A549 (cell line): ENCODE measurements at regions of chr7 and their contacts with region 1.

Region 1: GRCh38 chr7:51162724-51163329 is 153.8 kb downstream of the COBL start:
- DNase-seq: peak; percentile 41 to 88
- ATAC-seq: peak; percentile 97 to 99
- H3K4me3 ChIP-seq: no peak overlapping the region
- H3K27ac ChIP-seq: no peak overlapping the region
- H3K4me1 ChIP-seq: peaks cover 4% of the 10 kb centered on the region; the same call in 1 of the 3 replicates
- CTCF ChIP-seq: peak; percentile 94
- EP300 ChIP-seq: no peak
- POLR2A ChIP-seq: no peak
- RAD21 ChIP-seq: peak; percentile 86 to 91

Region 2: DNA sequence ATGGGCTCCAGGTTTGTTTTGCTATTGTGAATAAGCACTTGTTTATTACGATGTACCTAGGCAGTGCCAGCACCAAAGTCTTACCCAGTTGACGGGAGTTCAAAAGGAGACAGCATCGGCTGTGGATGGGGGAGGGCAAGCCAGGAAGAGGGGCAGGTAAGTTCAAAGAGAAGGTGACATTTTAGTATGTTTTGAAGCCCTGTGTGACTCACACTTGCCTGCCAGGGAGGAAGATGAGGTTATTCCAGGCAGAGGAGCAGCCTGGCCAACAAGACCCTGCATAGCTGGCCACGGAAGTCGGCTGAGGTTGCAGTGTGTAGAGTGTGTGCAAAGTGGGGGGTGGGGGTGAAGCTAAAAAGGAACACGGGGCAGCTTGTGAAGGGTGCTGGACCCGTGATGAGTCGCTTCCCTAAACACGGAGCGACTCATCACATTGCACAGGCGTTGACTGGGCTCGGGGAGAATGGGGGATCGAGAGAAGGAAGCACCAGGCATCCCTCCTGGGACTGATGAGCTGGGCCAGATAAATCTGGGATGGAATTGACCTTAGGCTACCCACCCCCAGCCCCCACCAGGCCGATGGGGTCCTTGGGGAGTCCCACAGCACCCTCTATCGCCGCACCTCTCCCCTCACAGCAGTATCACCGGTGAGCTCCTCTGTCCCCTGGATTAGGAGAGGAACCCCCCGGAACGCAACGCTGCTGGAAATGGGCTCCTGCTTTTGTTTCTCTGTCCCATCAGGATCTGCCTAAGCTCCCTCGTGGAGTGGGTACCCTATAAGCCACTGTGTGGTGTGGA is 956.2 kb before region 1 on chr7:
- CTCF ChIA-PET with region 1: interaction called, 53 read pairs
- POLR2A ChIA-PET with region 1: no interaction called
- DNase-seq: no peak
- ATAC-seq: 0 out of 6 replicates have a peak, but pooled peaks of 1 of the 2 experiments have one; percentile 45
- H3K4me3 ChIP-seq: no peak overlapping the region
- H3K27ac ChIP-seq: no peak overlapping the region
- H3K4me1 ChIP-seq: no peaks in the 10 kb centered on the region
- CTCF ChIP-seq: no peak
- EP300 ChIP-seq: no peak
- POLR2A ChIP-seq: no peak
- RAD21 ChIP-seq: no peak

Region 3: GRCh38 chr7:50838675-50839377 is 324.0 kb before region 1 on chr7:
- CTCF ChIA-PET with region 1: no interaction called
- POLR2A ChIA-PET with region 1: no interaction called
- DNase-seq: peak in 1 of 2 experiments; percentile 79
- ATAC-seq: peak; percentile 73 to 81
- H3K4me3 ChIP-seq: no peak overlapping the region
- H3K27ac ChIP-seq: peak overlapping the region; percentile 73 to 85
- H3K4me1 ChIP-seq: peaks cover 46% of the 10 kb centered on the region
- CTCF ChIP-seq: no peak
- EP300 ChIP-seq: peak; percentile 26 to 45; a peak in 2 of 5 replicates
- POLR2A ChIP-seq: no peak
- RAD21 ChIP-seq: peak in 1 of 2 experiments; percentile 25; a peak in 1 of 5 replicates

Region 4: GRCh38 chr7:51175316-51175991 is 12.6 kb after region 1 on chr7:
- CTCF ChIA-PET with region 1: interaction called, 65 read pairs
- POLR2A ChIA-PET with region 1: no interaction called
- DNase-seq: no peak
- ATAC-seq: 0 out of 6 replicates have a peak, but pooled peaks of 1 of the 2 experiments have one; percentile 13
- H3K4me3 ChIP-seq: no peak overlapping the region
- H3K27ac ChIP-seq: no peak overlapping the region
- H3K4me1 ChIP-seq: peaks cover 8% of the 10 kb centered on the region; the same call in 2 of the 3 replicates
- CTCF ChIP-seq: no peak
- EP300 ChIP-seq: no peak
- POLR2A ChIP-seq: no peak
- RAD21 ChIP-seq: no peak

Region 5: GRCh38 chr7:51352174-51353100 is 189.6 kb after region 1 on chr7:
- CTCF ChIA-PET with region 1: interaction called, 30 read pairs
- POLR2A ChIA-PET with region 1: no interaction called
- DNase-seq: no peak
- ATAC-seq: peak; percentile 38 to 52; a peak in 2 of 6 replicates
- H3K4me3 ChIP-seq: no peak overlapping the region
- H3K27ac ChIP-seq: no peak overlapping the region
- H3K4me1 ChIP-seq: peaks cover 8% of the 10 kb centered on the region; the same call in 2 of the 3 replicates
- CTCF ChIP-seq: no peak
- EP300 ChIP-seq: no peak
- POLR2A ChIP-seq: no peak
- RAD21 ChIP-seq: no peak

Region 6: DNA sequence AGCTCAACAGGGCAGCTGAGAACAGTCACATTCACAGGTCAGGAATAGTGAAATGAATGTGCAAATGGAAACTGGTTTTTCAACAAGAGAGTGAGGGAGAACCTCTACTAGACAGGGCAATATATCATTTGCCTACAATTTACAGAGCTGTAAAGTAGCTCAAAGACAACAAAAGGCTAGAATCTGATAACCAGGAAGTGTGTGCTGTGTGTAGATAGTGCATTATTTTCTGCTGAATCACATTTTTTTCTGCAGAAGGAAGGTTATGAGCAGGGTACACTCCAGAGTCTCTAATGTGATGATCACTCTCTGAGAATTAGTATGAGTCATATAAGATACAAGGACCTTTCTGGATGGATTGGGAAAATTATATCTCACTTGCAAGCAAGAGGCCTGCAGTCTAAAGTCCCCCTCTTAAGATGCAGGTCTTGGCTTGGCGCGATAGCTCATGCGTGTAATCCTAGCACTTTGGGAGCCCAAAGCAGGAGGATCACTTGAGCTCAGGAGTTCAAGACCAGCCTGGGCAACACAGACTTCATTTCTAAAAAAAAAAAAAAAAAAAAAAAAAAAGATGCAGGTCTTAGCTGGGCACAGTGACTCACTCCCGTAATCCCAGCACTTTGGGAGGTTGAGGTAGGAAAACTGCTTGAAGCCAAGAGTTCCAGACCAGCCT is 213.7 kb after region 1 on chr7:
- CTCF ChIA-PET with region 1: interaction called, 176 read pairs
- POLR2A ChIA-PET with region 1: no interaction called
- DNase-seq: peak in 1 of 2 experiments; percentile 89
- ATAC-seq: peak; percentile 90 to 98
- H3K4me3 ChIP-seq: no peak overlapping the region
- H3K27ac ChIP-seq: peak overlapping the region; percentile 36 to 77; a peak in 5 of 6 replicates
- H3K4me1 ChIP-seq: peaks cover 20% of the 10 kb centered on the region
- CTCF ChIP-seq: no peak
- EP300 ChIP-seq: no peak
- POLR2A ChIP-seq: no peak
- RAD21 ChIP-seq: no peak

Region 7: GRCh38 chr7:51517187-51517586 is 354.4 kb after region 1 on chr7:
- CTCF ChIA-PET with region 1: no interaction called
- POLR2A ChIA-PET with region 1: no interaction called
- DNase-seq: no peak
- ATAC-seq: no peak
- H3K4me3 ChIP-seq: no peak overlapping the region
- H3K27ac ChIP-seq: no peak overlapping the region
- H3K4me1 ChIP-seq: no peaks in the 10 kb centered on the region
- CTCF ChIP-seq: no peak
- EP300 ChIP-seq: no peak
- POLR2A ChIP-seq: no peak
- RAD21 ChIP-seq: no peak

Region 8: DNA sequence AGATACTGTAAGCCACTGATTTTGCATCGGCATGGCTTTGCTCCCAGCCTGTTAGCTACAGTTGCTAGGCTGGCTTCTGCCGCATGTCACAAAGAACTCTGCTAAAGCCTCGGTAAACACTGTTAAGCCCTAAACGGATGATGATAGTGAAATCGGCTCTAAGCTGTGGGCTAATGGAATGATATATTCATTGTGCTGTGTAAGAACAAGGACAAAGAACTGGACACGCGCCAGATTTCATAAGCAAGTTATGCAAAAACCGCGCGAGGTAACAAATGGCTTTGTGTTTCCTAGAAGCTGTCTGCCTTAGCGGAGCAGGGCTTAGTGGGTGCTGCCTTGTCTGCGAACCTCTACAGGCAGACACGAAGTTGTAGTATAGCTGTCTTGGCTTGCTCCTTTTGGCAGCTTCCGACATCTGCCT is 485.1 kb after region 1 on chr7:
- CTCF ChIA-PET with region 1: no interaction called
- POLR2A ChIA-PET with region 1: no interaction called
- DNase-seq: no peak
- ATAC-seq: no peak
- H3K4me3 ChIP-seq: no peak overlapping the region
- H3K27ac ChIP-seq: no peak overlapping the region
- H3K4me1 ChIP-seq: no peaks in the 10 kb centered on the region
- CTCF ChIP-seq: no peak
- EP300 ChIP-seq: no peak
- POLR2A ChIP-seq: no peak
- RAD21 ChIP-seq: no peak